Mammary epithelial cell (primary cell): ENCODE measurements at regions of chr3 and their contacts with region 1.

Region 1: GRCh38 chr3:189394599-189395121 is 222.9 kb downstream of the TPRG1 start:
- DNase-seq: no peak
- H3K4me3 ChIP-seq: no peak overlapping the region
- H3K27ac ChIP-seq: no peak overlapping the region
- H3K4me1 ChIP-seq: peaks cover 29% of the 10 kb centered on the region
- H3K27me3 ChIP-seq: no peaks in the 10 kb centered on the region
- CTCF ChIP-seq: no peak

Region 2: DNA sequence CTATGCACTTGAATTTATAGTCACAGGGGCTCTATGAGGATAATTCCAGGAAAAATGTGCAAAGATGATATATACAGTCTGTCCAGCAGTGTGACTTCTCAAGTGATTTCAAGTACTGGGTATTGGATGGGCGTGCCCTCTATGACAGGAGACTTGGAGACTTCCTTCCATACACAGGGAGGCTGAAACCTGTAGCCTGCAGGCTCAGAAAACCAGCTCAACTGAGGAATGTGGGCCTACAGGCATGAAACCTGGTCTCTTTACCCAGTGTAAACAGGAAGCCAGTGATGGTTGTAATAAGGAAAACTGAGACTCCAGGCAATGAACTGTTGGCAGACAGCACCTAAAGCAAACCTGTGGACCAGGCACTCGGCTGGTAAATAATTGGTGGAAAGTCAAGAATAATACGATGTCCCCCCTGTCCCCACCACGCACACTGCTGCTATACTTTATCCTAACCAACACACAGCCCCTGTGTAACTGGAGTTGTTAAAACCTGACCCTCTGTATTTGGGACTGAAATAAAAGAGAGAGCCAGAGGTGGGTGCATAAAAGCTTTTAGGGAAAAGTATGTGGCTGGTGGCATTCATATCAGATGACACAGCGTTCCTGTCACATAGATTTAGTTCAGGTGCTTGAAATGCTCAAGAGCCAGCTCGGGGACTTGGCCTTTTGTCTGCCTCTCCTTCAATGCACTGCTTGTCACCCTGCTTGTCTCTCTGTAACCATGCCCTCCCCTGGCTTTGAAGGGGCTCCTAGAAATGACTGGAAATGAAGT is 78.2 kb before region 1 on chr3:
- CTCF ChIA-PET with region 1: no interaction called
- dilution Hi-C with region 1: loop called (anchors 5 kb)
- in situ Hi-C with region 1: no loop called
- intact Hi-C with region 1: no loop called
- DNase-seq: peak; percentile 71
- H3K4me3 ChIP-seq: no peak overlapping the region
- H3K27ac ChIP-seq: peak overlapping the region; percentile 61
- H3K4me1 ChIP-seq: peaks cover 36% of the 10 kb centered on the region
- H3K27me3 ChIP-seq: no peaks in the 10 kb centered on the region
- CTCF ChIP-seq: no peak

Region 3: GRCh38 chr3:189349772-189350171 is 44.9 kb before region 1 on chr3:
- CTCF ChIA-PET with region 1: no interaction called
- dilution Hi-C with region 1: loop called (anchors 5 kb)
- in situ Hi-C with region 1: no loop called
- intact Hi-C with region 1: no loop called
- DNase-seq: no peak
- H3K4me3 ChIP-seq: no peak overlapping the region
- H3K27ac ChIP-seq: no peak overlapping the region
- H3K4me1 ChIP-seq: peaks cover 21% of the 10 kb centered on the region
- H3K27me3 ChIP-seq: no peaks in the 10 kb centered on the region
- CTCF ChIP-seq: no peak

Region 4: GRCh38 chr3:189563866-189564563 is 169.4 kb after region 1 on chr3:
- CTCF ChIA-PET with region 1: no interaction called
- dilution Hi-C with region 1: no loop called
- in situ Hi-C with region 1: no loop called
- intact Hi-C with region 1: loop called (anchors 5 kb)
- DNase-seq: peak; percentile 98
- H3K4me3 ChIP-seq: no peak overlapping the region
- H3K27ac ChIP-seq: peak overlapping the region; percentile 68
- H3K4me1 ChIP-seq: peaks cover 14% of the 10 kb centered on the region
- H3K27me3 ChIP-seq: no peaks in the 10 kb centered on the region
- CTCF ChIP-seq: peak in 1 of 2 donors; percentile 27

Region 5: GRCh38 chr3:189588070-189588820 is 193.6 kb after region 1 on chr3:
- CTCF ChIA-PET with region 1: no interaction called
- dilution Hi-C with region 1: no loop called
- in situ Hi-C with region 1: loop called in 1 of 2 experiments (anchors 10 kb)
- intact Hi-C with region 1: loop called (anchors 5 kb)
- DNase-seq: peak; percentile 90
- H3K4me3 ChIP-seq: peak overlapping the region; percentile 9 to 24 (median 9)
- H3K27ac ChIP-seq: peak overlapping the region; percentile 92
- H3K4me1 ChIP-seq: peaks cover 46% of the 10 kb centered on the region
- H3K27me3 ChIP-seq: no peaks in the 10 kb centered on the region
- CTCF ChIP-seq: no peak

Region 6: GRCh38 chr3:189833996-189834395 is 439.3 kb after region 1 on chr3:
- CTCF ChIA-PET with region 1: no interaction called
- dilution Hi-C with region 1: no loop called
- in situ Hi-C with region 1: no loop called
- intact Hi-C with region 1: loop called (anchors 5 kb)
- DNase-seq: peak; percentile 99
- H3K4me3 ChIP-seq: peak overlapping the region in 2 of 3 experiments; percentile 18 to 30
- H3K27ac ChIP-seq: peak overlapping the region; percentile 93
- H3K4me1 ChIP-seq: peaks cover 52% of the 10 kb centered on the region
- H3K27me3 ChIP-seq: no peaks in the 10 kb centered on the region
- CTCF ChIP-seq: no peak

Region 7: DNA sequence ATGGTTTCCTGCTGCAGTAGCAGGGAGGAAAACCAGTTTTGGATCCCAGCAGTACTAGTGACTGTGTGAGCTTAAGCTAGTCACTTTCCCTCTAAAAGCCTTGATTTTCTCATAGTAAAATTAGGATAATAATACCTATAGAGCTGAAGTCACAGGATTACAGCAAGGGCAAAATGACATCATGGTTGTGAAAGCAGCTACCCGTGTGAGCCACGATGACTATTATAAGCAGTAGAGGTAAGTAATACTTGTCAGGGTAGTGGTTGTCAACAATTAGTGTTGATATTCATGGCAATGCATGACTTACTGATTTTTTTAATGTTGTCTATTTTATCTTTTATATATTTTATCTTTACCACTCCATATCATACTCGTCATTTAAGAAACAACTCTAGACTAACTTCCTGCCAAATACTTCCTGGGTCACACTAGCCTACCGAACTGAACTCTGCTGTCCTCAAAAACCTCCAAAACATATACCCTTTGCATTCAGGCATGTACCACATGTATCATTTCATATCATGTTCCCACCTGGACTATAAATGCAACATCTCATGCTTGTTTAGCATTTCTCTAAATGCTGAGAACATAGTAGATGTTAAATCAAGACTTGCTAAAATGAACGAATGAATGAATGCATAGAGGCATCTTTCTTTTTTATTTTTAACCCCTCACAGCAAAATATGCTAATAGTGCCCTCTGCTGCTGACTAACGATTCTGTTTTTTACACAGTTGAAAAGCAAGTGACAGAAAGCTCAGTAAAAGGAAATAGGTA is 553.5 kb after region 1 on chr3:
- CTCF ChIA-PET with region 1: no interaction called
- dilution Hi-C with region 1: no loop called
- in situ Hi-C with region 1: no loop called
- intact Hi-C with region 1: loop called (anchors 5 kb)
- DNase-seq: peak; percentile 68
- H3K4me3 ChIP-seq: no peak overlapping the region
- H3K27ac ChIP-seq: peak overlapping the region; percentile 21
- H3K4me1 ChIP-seq: peaks cover 29% of the 10 kb centered on the region
- H3K27me3 ChIP-seq: no peaks in the 10 kb centered on the region
- CTCF ChIP-seq: peak; percentile 64 to 69